ENCODE measurements at regions of chr19 and their contacts with region 1.

Region 1: GRCh38 chr19:36796076-36796992 is 23.7 kb upstream of the ZNF850 start:
- DNase-seq: no peak
- ATAC-seq: no peak
- H3K4me3 Mint-ChIP-seq: peak overlapping the region; percentile 96
- H3K27ac Mint-ChIP-seq: peak overlapping the region; percentile 99
- H3K4me1 Mint-ChIP-seq: peaks cover 24% of the 10 kb centered on the region
- H3K27me3 Mint-ChIP-seq: peaks cover 4% of the 10 kb centered on the region
- CTCF ChIP-seq: no peak

Region 2: DNA sequence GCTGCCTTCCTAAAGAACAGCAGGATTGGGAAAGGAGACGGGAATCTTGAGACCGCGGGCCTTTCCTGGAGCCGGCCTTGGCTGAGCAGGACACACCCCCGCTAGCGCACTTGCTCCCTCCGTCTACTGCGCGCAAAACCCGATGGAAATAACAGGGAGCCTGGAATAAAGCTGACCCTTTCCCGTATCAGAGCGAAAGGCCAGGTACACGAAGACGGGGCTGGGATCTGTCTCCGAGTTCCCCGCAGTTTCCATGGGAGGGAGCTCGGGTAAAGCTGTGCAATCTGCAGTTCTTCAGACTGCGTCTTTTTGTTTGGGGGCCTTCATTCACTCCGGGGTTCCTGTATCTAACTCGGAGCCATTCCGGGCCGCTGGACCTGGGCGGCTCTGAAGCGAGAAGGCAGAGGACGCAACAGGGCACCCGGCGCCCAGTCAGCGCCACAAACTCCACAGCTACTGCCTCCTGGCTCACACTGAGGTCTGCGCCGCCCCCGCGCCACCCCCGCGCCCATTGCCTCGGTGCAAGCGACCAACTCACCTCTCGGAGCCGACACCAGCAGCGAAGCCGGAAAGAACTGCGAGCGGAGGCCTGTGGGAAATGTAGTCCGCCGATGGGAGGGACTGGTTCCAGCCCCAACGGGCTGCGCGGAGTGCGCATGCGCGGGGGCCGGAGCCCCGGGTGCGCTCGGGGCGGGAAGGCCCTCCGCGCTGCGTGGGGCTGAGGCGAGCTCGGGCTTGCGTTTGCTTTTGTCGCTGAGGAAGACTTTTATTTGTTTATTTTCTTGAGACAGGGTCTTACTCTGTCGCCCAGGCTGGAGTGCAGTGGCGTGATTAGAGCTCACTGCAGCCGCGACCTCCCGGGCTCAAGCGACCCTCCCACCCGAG is 417.5 kb before region 1 on chr19 and contains the start of gene ZFP14:
- CTCF ChIA-PET with region 1: no interaction called
- POLR2A ChIA-PET with region 1: no interaction called
- intact Hi-C with region 1: loop called (anchors 2 kb)
- DNase-seq: peak; percentile 92
- ATAC-seq: peak; percentile 99
- H3K4me3 Mint-ChIP-seq: peak within 1 kb of the TSS; percentile 94
- H3K27ac Mint-ChIP-seq: peak within 1 kb of the TSS; percentile 96
- H3K4me1 Mint-ChIP-seq: peaks cover 21% of the 10 kb centered on the region
- H3K27me3 Mint-ChIP-seq: no peaks in the 10 kb centered on the region
- CTCF ChIP-seq: no peak
- total RNA-seq, gene ZFP14: 7.7 and 10.4 TPM in 2 replicates

Region 3: DNA sequence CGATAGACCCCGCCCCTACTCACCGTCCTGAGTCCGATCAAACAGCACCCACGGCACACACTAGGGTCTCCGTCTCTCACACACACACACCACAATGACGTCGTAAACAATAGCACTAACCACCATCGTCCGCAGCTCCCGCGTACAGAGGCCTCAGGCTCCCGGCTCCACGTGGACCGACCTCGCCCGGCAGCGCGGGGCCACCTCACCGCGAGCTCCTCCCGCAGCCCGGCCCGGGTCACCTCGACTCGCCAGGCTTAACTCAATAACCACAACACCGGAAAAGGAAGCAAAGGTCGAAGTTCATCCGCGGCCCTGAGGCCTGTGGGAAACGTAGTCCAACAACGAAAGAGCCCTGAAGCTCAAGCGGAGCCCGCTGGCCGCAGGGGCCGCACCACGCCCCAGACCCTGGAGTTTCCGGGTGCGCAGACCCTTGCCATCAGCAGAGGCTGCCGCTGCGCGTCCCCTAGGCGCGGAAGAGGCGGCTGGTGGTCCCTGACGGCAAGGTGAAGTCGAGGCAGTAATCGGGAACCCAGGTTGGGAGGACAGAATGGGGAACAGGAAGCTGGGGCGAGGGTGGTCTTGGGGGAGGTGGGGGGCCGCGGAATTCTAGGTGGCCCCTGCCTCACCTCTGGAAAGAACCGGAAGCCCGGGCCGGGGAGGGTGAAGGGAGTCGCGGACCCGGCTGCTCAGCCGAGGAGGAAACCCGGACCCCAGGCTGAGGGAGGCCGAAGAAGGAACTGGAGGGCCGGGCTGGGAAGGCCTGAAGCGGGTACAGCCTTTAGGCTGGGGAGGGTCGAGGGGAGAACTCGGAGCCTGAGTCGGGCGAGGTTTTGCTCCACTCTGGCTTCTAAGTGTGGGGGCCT is 223.1 kb before region 1 on chr19 and contains the start of gene ZNF529:
- CTCF ChIA-PET with region 1: no interaction called
- POLR2A ChIA-PET with region 1: no interaction called
- intact Hi-C with region 1: loop called (anchors 1 kb)
- DNase-seq: peak; percentile 79
- ATAC-seq: peak; percentile 91
- H3K4me3 Mint-ChIP-seq: peak within 1 kb of the TSS; percentile 89
- H3K27ac Mint-ChIP-seq: peak within 1 kb of the TSS; percentile 86
- H3K4me1 Mint-ChIP-seq: peaks cover 33% of the 10 kb centered on the region
- H3K27me3 Mint-ChIP-seq: no peaks in the 10 kb centered on the region
- CTCF ChIP-seq: no peak
- total RNA-seq, gene ZNF529: 21.9 and 23.6 TPM in 2 replicates

Region 4: DNA sequence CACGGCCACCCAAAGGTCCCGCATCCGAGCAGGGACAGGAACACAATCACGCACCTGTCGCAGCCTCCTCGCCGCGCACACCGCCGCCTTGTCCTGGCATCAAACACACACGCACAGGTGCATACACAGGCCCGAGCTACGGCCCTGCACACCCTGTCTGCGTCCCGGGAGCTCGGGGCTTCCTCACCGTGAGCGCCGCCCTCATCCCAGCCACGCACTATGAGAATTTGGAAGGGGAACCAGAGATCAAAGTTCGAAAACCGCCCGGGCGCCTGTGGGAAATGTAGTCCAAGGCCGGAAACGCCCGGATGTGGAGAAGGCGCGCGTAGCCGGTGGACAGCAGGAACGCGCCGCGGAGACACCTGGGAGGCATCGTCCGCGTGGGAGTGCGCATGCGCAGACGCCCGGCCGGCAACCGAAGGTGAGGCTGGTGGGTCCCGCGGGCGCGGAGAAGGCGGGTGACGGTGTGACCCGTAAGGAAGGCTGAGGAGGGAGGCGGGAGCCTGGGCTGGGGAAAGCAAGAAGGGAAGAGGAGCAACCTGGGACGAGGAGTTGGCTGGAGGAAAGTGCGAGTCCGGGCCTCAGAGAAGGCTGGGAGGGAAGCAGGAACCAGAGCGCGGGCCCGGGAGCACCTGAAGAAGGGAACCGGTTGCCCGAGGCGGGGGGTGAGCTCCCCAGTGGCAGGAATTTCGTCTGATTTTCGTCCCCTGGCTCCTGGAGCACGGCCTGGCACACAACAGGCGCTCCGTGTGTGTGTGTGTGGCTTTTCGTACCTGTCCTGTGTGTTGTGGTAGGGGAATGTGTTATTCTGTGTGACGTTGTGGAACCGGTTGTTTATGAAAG is 108.9 kb before region 1 on chr19 and contains the start of gene ZNF567:
- CTCF ChIA-PET with region 1: no interaction called
- POLR2A ChIA-PET with region 1: no interaction called
- intact Hi-C with region 1: loop called (anchors 1 kb)
- DNase-seq: peak; percentile 95
- ATAC-seq: peak; percentile 93
- H3K4me3 Mint-ChIP-seq: peak within 1 kb of the TSS; percentile 98
- H3K27ac Mint-ChIP-seq: peak within 1 kb of the TSS; percentile 89
- H3K4me1 Mint-ChIP-seq: peaks cover 34% of the 10 kb centered on the region
- H3K27me3 Mint-ChIP-seq: no peaks in the 10 kb centered on the region
- CTCF ChIP-seq: no peak
- total RNA-seq, gene ZNF567: 13.3 and 15.0 TPM in 2 replicates

Region 5: DNA sequence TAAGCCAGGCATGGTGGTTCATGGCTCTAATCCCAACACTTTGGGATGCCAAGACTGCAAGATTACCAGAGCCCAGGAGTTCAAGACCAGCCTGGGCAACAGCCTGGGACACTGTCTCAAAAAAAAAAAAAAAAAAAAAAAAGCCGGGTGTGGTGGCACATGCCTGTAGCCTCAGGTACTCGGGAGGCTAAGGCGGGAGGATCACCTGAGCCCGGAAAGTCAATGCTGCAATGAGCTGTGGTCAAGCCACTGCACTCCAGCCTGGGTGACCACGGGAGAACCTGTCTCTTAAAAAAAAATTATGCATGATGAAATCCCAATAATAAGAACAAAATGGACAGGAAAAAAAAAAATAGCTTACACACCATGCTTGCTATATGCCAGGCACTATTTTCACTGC is 43.0 kb before region 1 on chr19:
- CTCF ChIA-PET with region 1: no interaction called
- POLR2A ChIA-PET with region 1: no interaction called
- intact Hi-C with region 1: no loop called
- DNase-seq: no peak
- ATAC-seq: no peak
- H3K4me3 Mint-ChIP-seq: no peak overlapping the region
- H3K27ac Mint-ChIP-seq: no peak overlapping the region
- H3K4me1 Mint-ChIP-seq: no peaks in the 10 kb centered on the region
- H3K27me3 Mint-ChIP-seq: no peaks in the 10 kb centered on the region
- CTCF ChIP-seq: no peak

Region 6: DNA sequence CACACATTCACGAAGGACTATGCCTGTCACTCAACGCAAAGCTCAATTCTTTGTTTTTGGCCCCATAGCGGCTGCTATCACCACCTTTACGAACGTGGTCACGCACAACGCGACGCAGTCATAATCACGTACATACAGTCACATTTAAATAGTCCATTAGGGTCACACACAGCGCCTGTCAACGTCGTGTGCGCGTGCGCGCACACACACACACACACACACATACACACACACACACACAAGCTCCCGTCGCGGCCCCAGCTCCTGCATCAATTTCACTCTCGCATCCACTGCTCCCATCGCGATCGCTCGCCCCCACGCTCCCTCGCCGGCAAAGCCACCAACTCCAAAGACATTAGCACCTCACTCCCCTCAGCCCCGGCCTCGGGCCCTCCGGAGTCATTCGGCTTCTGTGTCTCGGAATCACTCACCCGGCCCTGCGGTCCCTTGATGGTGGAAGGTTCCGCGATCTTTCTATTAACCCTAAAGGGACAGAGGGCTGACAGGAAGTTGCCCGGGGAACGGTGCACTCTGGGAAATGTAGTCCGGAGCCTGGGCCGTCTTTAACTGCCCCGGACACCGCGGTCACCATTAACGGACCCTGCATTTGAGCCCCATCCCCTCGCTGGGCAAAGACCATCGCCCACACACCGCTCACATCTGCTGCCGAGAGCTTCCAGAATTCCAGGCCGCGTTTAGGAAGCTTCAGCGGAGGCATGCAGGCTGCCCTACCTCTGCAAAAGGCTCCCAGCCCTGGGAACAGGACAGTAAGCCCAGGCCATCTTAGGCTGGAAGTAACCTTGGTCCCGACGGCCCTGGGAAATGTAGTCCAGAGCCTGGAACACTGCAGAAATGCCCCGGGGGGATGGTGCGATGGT is 41.8 kb after region 1 on chr19 and contains the start of gene ZNF790:
- CTCF ChIA-PET with region 1: no interaction called
- POLR2A ChIA-PET with region 1: interaction called, 14 read pairs
- intact Hi-C with region 1: loop called (anchors 1 kb)
- DNase-seq: peak; percentile 76
- ATAC-seq: peak; percentile 94
- H3K4me3 Mint-ChIP-seq: no peak within 1 kb of the TSS
- H3K27ac Mint-ChIP-seq: no peak within 1 kb of the TSS
- H3K4me1 Mint-ChIP-seq: peaks cover 2% of the 10 kb centered on the region
- H3K27me3 Mint-ChIP-seq: no peaks in the 10 kb centered on the region
- CTCF ChIP-seq: no peak
- total RNA-seq, gene ZNF790: 10.3 and 11.5 TPM in 2 replicates

Region 7: DNA sequence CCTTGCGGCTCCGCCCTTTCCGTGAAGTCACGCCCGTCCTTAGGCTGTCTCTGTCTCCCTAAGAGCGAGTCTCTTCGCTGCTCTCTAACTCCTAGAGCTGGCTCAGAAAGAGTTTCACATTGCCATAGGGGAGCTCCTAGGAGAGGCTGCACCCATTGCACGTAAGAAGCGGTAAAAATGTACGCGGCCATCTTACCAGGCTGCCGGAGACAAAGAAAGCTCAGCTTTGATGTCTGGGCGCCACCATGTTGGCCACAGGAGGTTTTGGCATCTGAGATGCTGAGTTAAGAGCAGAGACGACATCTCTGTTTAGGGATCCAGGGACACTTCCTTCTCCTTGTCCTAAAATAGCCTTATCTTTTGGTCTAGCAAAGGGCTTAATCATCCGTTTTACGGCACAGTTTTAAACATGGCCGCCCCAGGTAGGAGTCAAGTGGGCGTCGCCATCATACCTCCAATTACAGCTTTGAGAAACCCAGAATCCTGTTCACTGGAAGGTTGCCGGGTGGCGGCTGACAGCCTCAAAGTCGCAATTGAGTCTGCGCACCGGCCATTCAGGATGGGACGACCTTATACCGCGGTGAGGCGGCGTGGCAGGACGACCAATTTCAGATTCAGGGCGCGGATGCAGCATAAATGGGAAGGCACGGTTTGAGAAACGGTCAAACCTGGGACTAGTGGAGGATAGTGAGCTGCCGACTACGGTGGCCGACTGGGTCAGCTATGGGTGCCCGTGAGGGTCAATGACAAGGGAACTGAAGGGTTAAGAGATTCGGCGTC is 710.2 kb after region 1 on chr19 and contains the start of gene ZNF793:
- CTCF ChIA-PET with region 1: no interaction called
- POLR2A ChIA-PET with region 1: interaction called, 3 read pairs
- intact Hi-C with region 1: loop called (anchors 2 kb)
- DNase-seq: peak; percentile 70
- ATAC-seq: peak; percentile 87
- H3K4me3 Mint-ChIP-seq: no peak within 1 kb of the TSS
- H3K27ac Mint-ChIP-seq: no peak within 1 kb of the TSS
- H3K4me1 Mint-ChIP-seq: peaks cover 2% of the 10 kb centered on the region
- H3K27me3 Mint-ChIP-seq: no peaks in the 10 kb centered on the region
- CTCF ChIP-seq: no peak
- total RNA-seq, gene ZNF793: 8.4 and 8.7 TPM in 2 replicates

Measured in activated B cell treated with CpG ODN at 0.5 μM for 24 hours (primary cell).